PC-9 (cell line): ENCODE measurements at regions of chr12 and their contacts with region 1.

Region 1: DNA sequence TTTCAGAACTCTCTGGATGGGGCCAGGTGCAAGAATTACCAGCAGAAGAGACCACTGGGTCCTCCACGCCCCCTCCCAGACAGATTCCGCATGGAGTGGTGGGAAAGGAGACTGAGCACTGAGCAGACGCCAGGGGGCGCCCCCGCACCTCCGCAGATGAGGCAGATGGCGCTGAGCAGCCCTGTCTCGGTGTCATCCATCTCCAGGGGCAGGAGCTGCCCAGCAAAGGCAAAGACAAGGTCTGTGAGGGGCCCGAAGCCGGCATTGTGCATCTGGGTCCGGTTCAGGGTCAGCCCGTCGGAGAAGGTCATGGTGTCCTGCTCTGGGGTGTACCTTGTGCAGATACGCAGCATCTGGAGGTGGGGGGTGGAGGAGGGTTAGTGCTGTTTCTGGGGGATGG is 6.3 kb upstream of the ITGB7 start:
- DNase-seq: peak in 1 of 2 experiments; percentile 75
- H3K4me3 ChIP-seq: no peak overlapping the region
- H3K27ac ChIP-seq: no peak overlapping the region
- H3K4me1 ChIP-seq: peaks cover 30% of the 10 kb centered on the region
- H3K27me3 ChIP-seq: no peaks in the 10 kb centered on the region
- CTCF ChIP-seq: peak; percentile 92

Region 2: GRCh38 chr12:53159195-53159839 is 54.0 kb before region 1 on chr12:
- CTCF ChIA-PET with region 1: no interaction called
- POLR2A ChIA-PET with region 1: no interaction called
- intact Hi-C with region 1: loop called (anchors 2 kb)
- DNase-seq: peak in 1 of 2 experiments; percentile 77
- H3K4me3 ChIP-seq: no peak overlapping the region
- H3K27ac ChIP-seq: no peak overlapping the region
- H3K4me1 ChIP-seq: no peaks in the 10 kb centered on the region; the same call in 1 of the 2 replicates
- H3K27me3 ChIP-seq: no peaks in the 10 kb centered on the region
- CTCF ChIP-seq: peak; percentile 97

Region 3: DNA sequence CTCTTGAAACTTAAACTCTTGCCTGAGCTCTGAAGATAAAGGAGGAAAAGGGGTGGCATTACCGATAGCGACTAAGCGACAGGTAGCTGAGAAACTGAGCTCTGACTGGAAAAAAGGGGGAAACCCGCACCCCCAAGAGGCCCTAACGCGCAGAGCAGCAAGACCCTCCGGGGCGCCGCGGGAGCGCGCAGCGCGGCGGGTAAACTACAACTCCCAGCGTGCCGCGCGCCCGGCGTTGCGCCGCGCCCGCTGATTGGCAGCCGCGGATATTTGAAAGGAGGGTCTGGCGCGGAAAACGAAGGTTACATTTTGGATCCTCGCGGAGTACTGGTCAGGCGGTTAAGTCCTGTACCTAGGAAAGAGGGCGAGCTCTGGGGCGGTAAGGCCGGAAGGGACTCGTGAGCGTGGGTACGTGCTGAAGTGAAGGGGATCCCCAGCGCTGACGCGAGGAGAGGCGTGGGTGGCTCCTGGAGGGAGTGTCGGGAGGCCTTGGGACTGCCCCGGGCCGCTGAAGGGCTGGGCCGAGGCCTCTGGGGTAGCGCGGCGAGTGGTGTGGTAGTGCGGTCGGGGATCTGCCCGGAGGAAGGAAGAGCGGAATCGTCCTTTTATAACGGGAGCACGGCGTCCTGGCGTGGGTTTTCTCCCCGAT is 54.8 kb after region 1 on chr12 and contains the start of gene ESPL1:
- CTCF ChIA-PET with region 1: interaction called, 7 read pairs
- POLR2A ChIA-PET with region 1: interaction called, 4 read pairs
- intact Hi-C with region 1: loop called (anchors 1 kb)
- DNase-seq: peak; percentile 63 to 73
- H3K4me3 ChIP-seq: peak within 1 kb of the TSS; percentile 85
- H3K27ac ChIP-seq: no peak within 1 kb of the TSS
- H3K4me1 ChIP-seq: peaks cover 11% of the 10 kb centered on the region
- H3K27me3 ChIP-seq: no peaks in the 10 kb centered on the region
- CTCF ChIP-seq: no peak; the same call in 1 of the 2 replicates
- total RNA-seq, gene ESPL1: 37.4 and 42.0 TPM in 2 replicates